CD4-positive, alpha-beta memory T cell (primary cell): ENCODE measurements at regions of chr15 and their contacts with region 1.

Region 1: GRCh38 chr15:68795298-68795848 is 25.3 kb downstream of the ANP32A start:
- DNase-seq: peak; percentile 57 to 82 (median 62)
- H3K4me3 ChIP-seq: no peak overlapping the region
- H3K4me3 Mint-ChIP-seq: peak overlapping the region; percentile 2 to 80 (median 70)
- H3K27ac ChIP-seq: peak overlapping the region; percentile 32
- H3K27ac Mint-ChIP-seq: peak overlapping the region; percentile 73 to 91 (median 85)
- H3K4me1 ChIP-seq: peaks cover 100% of the 10 kb centered on the region
- H3K4me1 Mint-ChIP-seq: peaks cover 71 to 99% (median 89%) of the 10 kb centered on the region in 4 donors
- H3K27me3 ChIP-seq: no peaks in the 10 kb centered on the region
- H3K27me3 Mint-ChIP-seq: no peaks in the 10 kb centered on the region

Region 2: DNA sequence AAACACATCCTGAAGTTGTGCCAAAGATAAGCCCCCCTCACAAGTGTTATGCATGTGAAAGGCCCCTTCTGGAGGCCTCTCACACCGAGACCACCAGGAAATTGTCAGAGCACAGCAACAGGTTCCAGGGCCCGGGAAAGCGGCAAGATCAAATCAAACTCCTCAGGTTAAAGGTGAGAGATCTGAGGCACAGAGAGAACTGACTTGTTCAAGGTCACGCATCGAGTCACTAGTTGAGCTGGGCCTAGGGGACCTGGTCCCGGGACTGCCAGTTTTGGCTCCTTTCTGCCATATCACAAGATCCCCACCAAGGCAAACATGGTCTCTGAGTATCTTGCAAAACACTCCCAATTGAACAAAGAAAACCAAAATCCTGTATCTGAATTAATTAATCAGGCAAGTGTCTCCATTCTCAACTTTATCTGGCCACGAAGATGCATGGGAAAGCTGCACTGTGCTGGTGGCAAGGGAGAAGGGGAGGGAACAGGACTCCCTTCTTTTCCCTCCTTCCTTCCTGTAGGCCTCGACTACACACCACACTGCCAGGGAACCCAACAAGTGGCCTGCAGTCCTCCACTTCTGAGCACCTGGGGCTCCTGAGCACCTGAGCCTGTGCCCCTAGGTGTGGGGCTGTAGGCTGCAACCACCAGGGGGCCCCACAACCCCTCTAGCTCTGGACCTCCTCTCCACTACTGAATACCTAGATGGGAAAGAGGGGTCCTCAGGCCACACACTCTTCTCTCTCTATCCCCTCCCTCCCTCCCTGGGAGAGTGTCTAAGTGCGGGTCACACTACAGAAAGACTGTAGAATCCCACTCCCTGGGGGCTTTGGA is 11.9 kb before region 1 on chr15:
- CTCF ChIA-PET with region 1: interaction called, 27 read pairs
- POLR2A ChIA-PET with region 1: interaction called, 5 read pairs
- intact Hi-C with region 1: no loop called
- DNase-seq: peak; percentile 58 to 67 (median 60)
- H3K4me3 ChIP-seq: no peak overlapping the region
- H3K4me3 Mint-ChIP-seq: peak overlapping the region in 1 of 8 donors; percentile 8
- H3K27ac ChIP-seq: no peak overlapping the region
- H3K27ac Mint-ChIP-seq: peak overlapping the region in 6 of 7 donors; percentile 12 to 89 (median 74)
- H3K4me1 ChIP-seq: peaks cover 16% of the 10 kb centered on the region
- H3K4me1 Mint-ChIP-seq: peaks cover 18 to 24% (median 21%) of the 10 kb centered on the region in 4 donors
- H3K27me3 ChIP-seq: no peaks in the 10 kb centered on the region
- H3K27me3 Mint-ChIP-seq: no peaks in the 10 kb centered on the region